Activated naive CD4-positive, alpha-beta T cell treated with anti-CD3 and anti-CD28 coated beads for 36 hours (primary cell): ENCODE measurements at regions of chr17 and their contacts with region 1.

Region 1: DNA sequence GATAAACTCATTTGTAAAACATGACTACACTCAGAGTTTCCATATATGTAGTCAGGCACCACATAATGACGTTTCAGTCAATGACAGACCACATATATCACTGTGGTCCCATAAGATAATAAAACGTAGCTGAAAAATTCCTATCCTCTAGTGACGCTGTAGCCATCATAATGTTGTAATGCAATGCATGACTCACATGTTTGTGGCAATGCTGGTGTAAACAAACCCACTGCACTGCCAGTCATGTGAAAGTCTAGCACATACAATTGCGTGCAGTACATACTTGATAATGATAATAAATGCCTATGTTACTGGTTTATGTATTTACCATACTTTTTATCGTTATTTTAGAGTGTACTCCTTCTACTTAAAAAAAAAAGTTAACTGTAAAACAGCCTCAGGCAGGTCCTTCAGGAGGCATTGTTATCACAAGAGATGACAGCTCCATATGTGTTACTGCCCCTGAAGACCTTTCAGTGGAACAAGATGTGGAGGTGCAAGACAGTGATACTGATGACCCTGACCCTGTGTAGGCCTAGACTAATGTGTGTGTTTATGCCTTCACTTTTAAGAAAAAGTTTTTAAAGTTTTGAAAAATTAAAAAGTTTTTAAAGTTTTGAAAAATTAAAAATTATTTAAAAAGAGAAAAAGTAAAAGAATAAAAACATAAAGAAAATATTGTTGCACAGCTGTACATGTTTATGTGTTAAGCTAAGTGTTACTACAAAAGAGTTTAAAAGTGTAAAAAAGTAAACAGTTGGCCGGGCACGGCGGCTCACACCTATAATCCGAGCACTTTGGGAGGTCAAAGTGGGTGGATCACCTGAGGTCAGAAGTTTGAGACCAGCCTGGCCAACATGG is 9.0 kb downstream of the STAT5B start:
- DNase-seq: peak; percentile 70
- H3K4me3 Mint-ChIP-seq: peak overlapping the region; percentile 38
- H3K27ac Mint-ChIP-seq: peak overlapping the region; percentile 97
- H3K4me1 Mint-ChIP-seq: peaks cover 68% of the 10 kb centered on the region
- H3K27me3 Mint-ChIP-seq: no peaks in the 10 kb centered on the region

Region 2: DNA sequence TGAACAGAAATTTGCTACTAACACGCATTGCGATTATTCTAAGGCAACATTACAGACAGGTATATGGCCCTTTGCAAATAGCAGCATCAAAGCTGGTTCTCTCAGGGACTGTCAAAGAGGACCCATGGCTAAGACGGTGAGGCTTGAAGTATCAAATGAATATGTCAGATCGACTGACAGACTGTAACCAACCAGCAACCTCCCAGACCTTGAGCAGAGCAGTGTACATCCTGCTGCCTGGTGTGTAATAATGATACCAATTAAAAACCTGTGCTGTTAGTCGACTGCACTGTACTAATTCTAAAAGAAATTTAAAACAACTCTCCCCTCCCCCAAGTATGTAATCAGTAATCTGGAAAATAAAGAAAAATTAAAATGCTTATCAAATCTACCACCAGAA is 36.9 kb before region 1 on chr17:
- CTCF ChIA-PET with region 1: interaction called, 3 read pairs
- intact Hi-C with region 1: loop called (anchors 5 kb)
- DNase-seq: peak; percentile 43
- H3K4me3 Mint-ChIP-seq: no peak overlapping the region
- H3K27ac Mint-ChIP-seq: peak overlapping the region; percentile 56
- H3K4me1 Mint-ChIP-seq: peaks cover 42% of the 10 kb centered on the region
- H3K27me3 Mint-ChIP-seq: no peaks in the 10 kb centered on the region

Region 3: GRCh38 chr17:42287926-42288802 is 21.0 kb after region 1 on chr17 and contains the start of gene STAT5A:
- CTCF ChIA-PET with region 1: no interaction called
- intact Hi-C with region 1: loop called (anchors 1 kb)
- DNase-seq: peak; percentile 88
- H3K4me3 Mint-ChIP-seq: peak within 1 kb of the TSS; percentile 86
- H3K27ac Mint-ChIP-seq: peak within 1 kb of the TSS; percentile 95
- H3K4me1 Mint-ChIP-seq: peaks cover 68% of the 10 kb centered on the region
- H3K27me3 Mint-ChIP-seq: no peaks in the 10 kb centered on the region
- total RNA-seq, gene STAT5A: 165 to 174 TPM

Region 4: DNA sequence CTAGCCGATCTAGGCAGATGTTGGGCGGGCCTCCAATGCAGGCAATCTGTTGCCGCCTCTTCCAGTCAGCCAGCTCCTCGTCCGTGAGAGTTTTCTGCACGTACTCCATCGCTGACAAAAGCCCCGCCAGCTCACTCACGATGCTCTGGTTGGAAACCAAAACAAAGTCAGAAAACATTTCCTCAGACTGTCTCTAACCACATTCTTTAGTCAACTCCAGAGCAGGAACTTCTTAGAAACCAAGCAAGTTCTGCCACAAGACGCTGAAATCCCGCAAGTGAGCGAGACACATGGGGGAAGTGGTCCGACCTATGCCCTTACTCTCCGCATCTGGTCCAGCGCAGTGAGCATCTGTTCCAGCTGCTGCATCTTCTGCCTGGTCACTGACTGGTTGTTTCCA is 70.3 kb after region 1 on chr17:
- CTCF ChIA-PET with region 1: no interaction called
- intact Hi-C with region 1: loop called (anchors 1 kb)
- DNase-seq: peak; percentile 92
- H3K4me3 Mint-ChIP-seq: peak overlapping the region; percentile 43
- H3K27ac Mint-ChIP-seq: peak overlapping the region; percentile 90
- H3K4me1 Mint-ChIP-seq: peaks cover 84% of the 10 kb centered on the region
- H3K27me3 Mint-ChIP-seq: no peaks in the 10 kb centered on the region

Region 5: GRCh38 chr17:42378597-42379594 is 111.7 kb after region 1 on chr17:
- CTCF ChIA-PET with region 1: no interaction called
- intact Hi-C with region 1: loop called (anchors 2 kb)
- DNase-seq: peak; percentile 73
- H3K4me3 Mint-ChIP-seq: peak overlapping the region; percentile 63
- H3K27ac Mint-ChIP-seq: peak overlapping the region; percentile 95
- H3K4me1 Mint-ChIP-seq: peaks cover 90% of the 10 kb centered on the region
- H3K27me3 Mint-ChIP-seq: no peaks in the 10 kb centered on the region